ENCODE measurements at regions of chr2 and their contacts with region 1.

Region 1: GRCh38 chr2:217650716-217651360 is 352.0 kb downstream of the TNS1 start:
- DNase-seq: peak; percentile 12
- H3K4me3 Mint-ChIP-seq: no peak overlapping the region
- H3K27ac Mint-ChIP-seq: no peak overlapping the region
- H3K4me1 Mint-ChIP-seq: no peaks in the 10 kb centered on the region
- H3K27me3 Mint-ChIP-seq: peaks cover 4% of the 10 kb centered on the region

Region 2: GRCh38 chr2:216777650-216778273 is 873.1 kb before region 1 on chr2:
- intact Hi-C with region 1: loop called (anchors 1 kb)
- DNase-seq: peak; percentile 36
- H3K4me3 Mint-ChIP-seq: no peak overlapping the region
- H3K27ac Mint-ChIP-seq: no peak overlapping the region
- H3K4me1 Mint-ChIP-seq: peaks cover 4% of the 10 kb centered on the region
- H3K27me3 Mint-ChIP-seq: peaks cover 13% of the 10 kb centered on the region

Region 3: GRCh38 chr2:217756375-217757107 is 105.7 kb after region 1 on chr2:
- intact Hi-C with region 1: loop called (anchors 2 kb)
- DNase-seq: peak; percentile 39
- H3K4me3 Mint-ChIP-seq: no peak overlapping the region
- H3K27ac Mint-ChIP-seq: peak overlapping the region; percentile 63
- H3K4me1 Mint-ChIP-seq: peaks cover 21% of the 10 kb centered on the region
- H3K27me3 Mint-ChIP-seq: peaks cover 2% of the 10 kb centered on the region